ENCODE measurements at regions of chr15 and their contacts with region 1.

Region 1: GRCh38 chr15:78241007-78241406 is 6.6 kb upstream of the ACSBG1 start:
- DNase-seq: peak; percentile 53
- H3K4me3 ChIP-seq: no peak overlapping the region
- H3K27ac ChIP-seq: no peak overlapping the region
- H3K4me1 ChIP-seq: peaks cover 7% of the 10 kb centered on the region
- H3K27me3 ChIP-seq: peaks cover 2% of the 10 kb centered on the region
- CTCF ChIP-seq: peak; percentile 68 to 93

Region 2: GRCh38 chr15:77959432-77959879 is 281.6 kb before region 1 on chr15:
- CTCF ChIA-PET with region 1: no interaction called
- dilution Hi-C with region 1: no loop called
- in situ Hi-C with region 1: loop called (anchors 10 to 25 kb)
- intact Hi-C with region 1: loop called (anchors 2 kb)
- DNase-seq: peak; percentile 57
- H3K4me3 ChIP-seq: peak overlapping the region in 2 of 3 experiments; percentile 21 to 28
- H3K27ac ChIP-seq: no peak overlapping the region
- H3K4me1 ChIP-seq: peaks cover 4% of the 10 kb centered on the region
- H3K27me3 ChIP-seq: no peaks in the 10 kb centered on the region
- CTCF ChIP-seq: peak; percentile 83 to 98

Region 3: GRCh38 chr15:78131295-78132061 is 109.5 kb before region 1 on chr15 and contains the start of gene CIB2:
- CTCF ChIA-PET with region 1: no interaction called
- dilution Hi-C with region 1: no loop called
- in situ Hi-C with region 1: no loop called
- intact Hi-C with region 1: loop called (anchors 1 kb)
- DNase-seq: no peak
- H3K4me3 ChIP-seq: peak within 1 kb of the TSS; percentile 39 to 63 (median 56)
- H3K27ac ChIP-seq: peak within 1 kb of the TSS; percentile 24
- H3K4me1 ChIP-seq: peaks cover 21% of the 10 kb centered on the region
- H3K27me3 ChIP-seq: no peaks in the 10 kb centered on the region
- CTCF ChIP-seq: peak; percentile 51 to 58
- total RNA-seq, gene CIB2: 5.4 to 6.5 TPM

Region 4: GRCh38 chr15:78195735-78196201 is 45.2 kb before region 1 on chr15:
- CTCF ChIA-PET with region 1: interaction called, 7 read pairs
- dilution Hi-C with region 1: no loop called
- in situ Hi-C with region 1: no loop called
- intact Hi-C with region 1: loop called (anchors 1 kb)
- DNase-seq: peak; percentile 31
- H3K4me3 ChIP-seq: no peak overlapping the region
- H3K27ac ChIP-seq: no peak overlapping the region
- H3K4me1 ChIP-seq: no peaks in the 10 kb centered on the region
- H3K27me3 ChIP-seq: no peaks in the 10 kb centered on the region
- CTCF ChIP-seq: peak; percentile 72 to 85

Region 5: DNA sequence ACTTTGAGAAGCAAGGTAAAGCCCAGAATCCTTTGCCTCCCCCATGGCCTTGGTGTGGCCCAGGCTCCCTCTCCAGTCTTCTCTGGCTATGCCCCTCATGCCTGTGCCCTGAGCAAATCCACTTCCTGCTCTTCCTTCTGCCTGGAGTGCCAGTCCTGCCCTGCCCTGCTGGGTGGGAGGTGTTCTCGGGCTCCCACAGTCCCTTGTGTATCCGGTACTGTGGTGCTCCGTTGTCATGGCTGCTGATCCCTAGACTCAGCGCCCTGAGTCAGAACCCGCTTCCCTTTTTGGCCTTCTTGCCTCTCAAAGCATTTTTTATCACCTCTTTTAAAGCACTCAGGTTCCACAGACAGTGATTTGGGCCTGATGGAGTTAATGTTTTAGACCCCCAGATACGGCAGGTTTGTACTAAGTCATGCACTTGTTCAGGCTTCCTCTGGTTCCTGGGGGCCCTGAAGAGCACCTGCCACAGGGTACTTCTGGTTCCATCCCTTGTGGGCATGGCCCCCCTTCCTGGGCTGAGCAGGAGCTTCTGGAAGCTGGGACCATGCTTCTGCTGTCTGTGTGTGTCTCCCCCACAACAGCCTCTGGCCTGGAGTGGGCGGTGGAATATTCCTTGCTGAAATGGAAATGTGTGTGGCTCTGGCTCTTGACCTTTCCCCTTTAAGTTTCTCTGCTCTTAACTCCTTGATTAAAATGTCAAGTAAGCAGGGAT is 599.8 kb after region 1 on chr15:
- CTCF ChIA-PET with region 1: no interaction called
- dilution Hi-C with region 1: no loop called
- in situ Hi-C with region 1: no loop called
- intact Hi-C with region 1: no loop called
- DNase-seq: peak; percentile 31
- H3K4me3 ChIP-seq: no peak overlapping the region
- H3K27ac ChIP-seq: no peak overlapping the region
- H3K4me1 ChIP-seq: peaks cover 4% of the 10 kb centered on the region
- H3K27me3 ChIP-seq: no peaks in the 10 kb centered on the region
- CTCF ChIP-seq: no peak

Measured in mammary epithelial cell (primary cell).